Esophagus muscularis mucosa (tissue), 4 donors: ENCODE measurements at regions of chr9 and their contacts with region 1.

Region 1: DNA sequence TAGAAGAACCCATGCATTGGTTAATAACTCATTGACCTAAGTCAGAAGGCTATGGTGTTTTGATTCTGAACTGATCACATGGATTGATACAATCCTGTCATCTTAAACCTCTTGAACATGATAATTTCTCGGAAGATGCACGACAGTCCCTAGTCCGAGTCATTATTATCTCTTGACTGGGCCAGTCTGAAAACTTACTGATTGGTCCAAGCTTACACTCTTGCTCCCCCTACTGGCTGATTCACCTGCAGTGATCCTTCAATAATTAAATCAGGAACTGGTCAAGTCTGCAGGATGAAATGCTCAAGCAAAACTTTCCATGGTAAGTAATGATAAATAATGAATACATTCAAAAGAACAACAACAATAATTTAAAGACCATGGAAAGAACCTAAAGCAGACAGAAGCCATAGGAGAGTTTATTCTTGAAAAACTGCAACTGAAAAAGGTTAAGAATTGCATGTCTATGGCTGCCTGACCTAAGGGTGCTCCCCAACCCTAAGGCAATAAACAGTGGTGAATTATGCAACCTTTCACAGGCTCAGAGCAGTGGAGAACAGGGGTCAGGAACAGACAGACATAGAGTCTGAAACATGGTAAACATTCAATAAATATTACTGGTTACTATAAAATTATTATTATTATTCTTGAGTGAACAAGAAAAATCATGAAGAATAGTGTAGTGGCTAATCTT is 79.3 kb downstream of the BRINP1 start:
- DNase-seq: no peak
- H3K4me3 ChIP-seq: no peak overlapping the region
- H3K27ac ChIP-seq: no peak overlapping the region
- H3K4me1 ChIP-seq: no peaks in the 10 kb centered on the region
- H3K27me3 ChIP-seq: peaks cover 0 to 8% (median 0%) of the 10 kb centered on the region in 4 donors
- CTCF ChIP-seq: peak; percentile 79 to 89 (median 82)
- EP300 ChIP-seq: no peak
- POLR2A ChIP-seq: no peak

Region 2: GRCh38 chr9:118829334-118829733 is 460.6 kb before region 1 on chr9:
- intact Hi-C with region 1: loop called (anchors 2 kb)
- DNase-seq: no peak
- H3K4me3 ChIP-seq: no peak overlapping the region
- H3K27ac ChIP-seq: no peak overlapping the region
- H3K4me1 ChIP-seq: no peaks in the 10 kb centered on the region
- H3K27me3 ChIP-seq: no peaks in the 10 kb centered on the region
- CTCF ChIP-seq: peak; percentile 40 to 52 (median 46)
- EP300 ChIP-seq: no peak
- POLR2A ChIP-seq: no peak

Region 3: DNA sequence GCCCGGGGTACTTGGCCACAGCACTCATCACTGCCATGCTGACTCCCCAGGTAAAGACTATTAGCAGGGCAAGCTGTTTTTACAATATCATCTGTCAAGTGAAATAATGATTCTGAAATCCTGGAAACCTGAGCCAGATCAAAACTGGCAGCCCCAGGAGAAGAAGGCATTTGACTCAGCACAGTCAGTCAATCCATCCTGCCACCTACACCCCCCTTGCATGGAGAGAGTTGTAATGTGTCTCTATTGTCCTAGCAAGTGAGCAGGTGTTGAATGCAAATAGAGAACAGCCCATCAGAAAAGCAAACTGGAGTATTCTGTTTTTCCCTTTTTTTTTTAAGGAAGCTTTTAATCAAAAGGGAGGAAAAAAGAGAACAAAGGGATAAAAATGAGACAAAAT is 211.9 kb before region 1 on chr9:
- intact Hi-C with region 1: no loop called
- DNase-seq: no peak
- H3K4me3 ChIP-seq: no peak overlapping the region
- H3K27ac ChIP-seq: no peak overlapping the region
- H3K4me1 ChIP-seq: no peaks in the 10 kb centered on the region
- H3K27me3 ChIP-seq: no peaks in the 10 kb centered on the region
- CTCF ChIP-seq: no peak
- EP300 ChIP-seq: no peak
- POLR2A ChIP-seq: no peak